ENCODE measurements at regions of chr19 and their contacts with region 1.

Region 1: DNA sequence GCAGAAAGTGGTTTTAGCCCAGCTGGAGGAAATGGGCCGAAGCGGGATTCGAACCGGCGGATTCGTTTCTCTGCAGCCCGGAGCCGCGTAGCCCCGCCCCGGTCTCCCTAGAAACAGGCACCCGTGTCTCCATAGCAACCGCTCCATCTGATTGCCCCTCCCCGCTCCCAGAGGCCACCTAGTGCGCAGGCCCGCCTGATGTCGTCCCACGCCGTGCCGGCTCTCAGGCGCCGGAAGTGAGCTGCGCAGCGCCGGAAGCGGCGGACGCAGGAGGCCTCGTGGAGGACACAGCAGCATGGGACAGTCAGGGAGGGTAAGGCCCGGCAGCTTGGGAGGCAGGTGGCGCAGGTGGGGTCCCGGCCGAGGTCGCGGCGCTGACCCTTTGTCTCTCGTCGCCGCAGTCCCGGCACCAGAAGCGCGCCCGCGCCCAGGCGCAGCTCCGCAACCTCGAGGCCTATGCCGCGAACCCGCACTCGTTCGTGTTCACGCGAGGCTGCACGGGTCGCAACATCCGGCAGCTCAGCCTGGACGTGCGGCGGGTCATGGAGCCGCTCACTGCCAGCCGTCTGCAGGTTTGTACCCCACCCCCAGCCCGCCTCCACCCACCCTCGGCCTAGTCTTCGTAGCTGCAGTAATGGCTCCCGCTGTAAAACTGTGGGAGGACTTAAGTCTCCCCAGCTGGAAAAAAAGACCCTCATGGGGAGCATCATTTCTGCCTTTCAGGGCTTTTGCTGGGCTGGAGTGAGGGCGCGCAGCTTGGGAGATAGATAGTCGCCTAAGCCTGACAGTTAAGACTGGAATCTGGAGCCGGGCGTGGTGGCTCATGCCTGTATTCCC is at the start of gene PPAN:
- DNase-seq: peak; percentile 97
- H3K4me3 Mint-ChIP-seq: peak within 1 kb of the TSS; percentile 97
- H3K27ac Mint-ChIP-seq: peak within 1 kb of the TSS; percentile 99
- H3K4me1 Mint-ChIP-seq: peaks cover 60% of the 10 kb centered on the region
- H3K27me3 Mint-ChIP-seq: peaks cover 1% of the 10 kb centered on the region
- total RNA-seq, gene PPAN: 234 and 250 TPM in 2 replicates

Region 2: DNA sequence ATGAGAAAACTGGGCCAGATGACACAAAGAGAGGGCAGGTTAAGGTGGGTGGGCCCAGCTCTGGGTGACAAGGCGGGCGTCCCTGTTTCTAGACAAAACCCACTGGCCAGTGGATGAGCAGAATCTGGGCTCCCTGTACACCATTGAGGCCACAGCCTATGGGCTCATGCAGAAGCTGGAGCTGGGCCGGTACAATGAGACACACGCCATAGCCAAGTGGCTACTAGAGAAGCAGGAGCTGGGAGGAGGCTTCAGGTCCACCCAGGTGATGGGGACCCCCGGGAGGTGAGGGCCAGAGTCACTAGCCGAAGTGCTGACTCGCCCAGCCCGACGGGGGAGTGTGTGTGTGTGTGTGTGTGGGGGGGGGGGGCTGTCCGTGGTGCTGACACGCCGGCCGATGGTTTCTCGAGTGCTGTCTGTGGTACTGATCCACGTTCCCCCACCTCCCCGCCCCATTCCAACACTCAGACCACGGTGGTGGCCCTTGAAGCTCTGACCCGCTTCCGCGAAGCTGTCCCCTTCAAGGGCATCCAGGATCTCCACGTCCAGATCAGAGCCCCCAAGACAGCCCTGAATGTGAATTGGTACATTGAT is 44.5 kb before region 1 on chr19:
- intact Hi-C with region 1: no loop called
- DNase-seq: no peak
- H3K4me3 Mint-ChIP-seq: no peak overlapping the region
- H3K27ac Mint-ChIP-seq: no peak overlapping the region
- H3K4me1 Mint-ChIP-seq: no peaks in the 10 kb centered on the region
- H3K27me3 Mint-ChIP-seq: peaks cover 3% of the 10 kb centered on the region

Region 3: GRCh38 chr19:10085641-10086590 is 20.4 kb before region 1 on chr19 and contains the start of gene SHFL:
- intact Hi-C with region 1: loop called (anchors 2 kb)
- DNase-seq: peak; percentile 88
- H3K4me3 Mint-ChIP-seq: peak within 1 kb of the TSS; percentile 90
- H3K27ac Mint-ChIP-seq: peak within 1 kb of the TSS; percentile 88
- H3K4me1 Mint-ChIP-seq: peaks cover 7% of the 10 kb centered on the region
- H3K27me3 Mint-ChIP-seq: peaks cover 2% of the 10 kb centered on the region
- total RNA-seq, gene SHFL: 64.1 and 70.5 TPM in 2 replicates

Region 4: DNA sequence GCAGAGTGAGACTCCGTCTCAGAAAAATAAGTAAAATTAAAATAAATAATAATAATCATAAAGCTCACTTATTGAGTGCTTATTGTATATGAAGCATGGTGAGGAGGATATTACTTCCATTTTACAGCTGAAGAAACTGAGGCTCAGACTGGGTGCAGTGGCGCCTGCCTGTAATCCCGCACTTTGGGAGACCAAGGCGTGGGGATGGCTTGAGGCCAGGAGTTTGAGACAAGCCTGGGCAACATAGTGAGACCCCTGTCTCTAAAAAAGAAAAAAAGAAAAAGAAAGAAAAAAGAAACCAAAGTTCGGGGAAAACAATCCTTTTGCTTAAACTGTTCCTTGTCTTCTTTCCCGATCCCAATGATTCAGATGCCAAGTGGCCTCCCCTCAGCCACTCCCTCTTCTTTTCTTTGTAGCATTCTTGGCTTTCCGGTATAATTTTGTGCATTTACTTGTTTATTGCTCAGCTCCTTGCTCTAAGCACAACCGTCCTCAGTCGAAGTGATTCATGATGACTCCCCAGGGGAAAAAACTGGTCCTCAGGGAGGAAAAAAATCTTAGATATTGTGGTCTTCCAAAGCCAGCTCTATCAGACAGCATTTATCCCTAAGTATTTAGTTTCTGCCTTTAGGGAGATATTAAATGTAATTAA is 14.3 kb after region 1 on chr19:
- intact Hi-C with region 1: loop called (anchors 1 kb)
- DNase-seq: no peak
- H3K4me3 Mint-ChIP-seq: no peak overlapping the region
- H3K27ac Mint-ChIP-seq: no peak overlapping the region
- H3K4me1 Mint-ChIP-seq: peaks cover 11% of the 10 kb centered on the region
- H3K27me3 Mint-ChIP-seq: no peaks in the 10 kb centered on the region

Region 5: DNA sequence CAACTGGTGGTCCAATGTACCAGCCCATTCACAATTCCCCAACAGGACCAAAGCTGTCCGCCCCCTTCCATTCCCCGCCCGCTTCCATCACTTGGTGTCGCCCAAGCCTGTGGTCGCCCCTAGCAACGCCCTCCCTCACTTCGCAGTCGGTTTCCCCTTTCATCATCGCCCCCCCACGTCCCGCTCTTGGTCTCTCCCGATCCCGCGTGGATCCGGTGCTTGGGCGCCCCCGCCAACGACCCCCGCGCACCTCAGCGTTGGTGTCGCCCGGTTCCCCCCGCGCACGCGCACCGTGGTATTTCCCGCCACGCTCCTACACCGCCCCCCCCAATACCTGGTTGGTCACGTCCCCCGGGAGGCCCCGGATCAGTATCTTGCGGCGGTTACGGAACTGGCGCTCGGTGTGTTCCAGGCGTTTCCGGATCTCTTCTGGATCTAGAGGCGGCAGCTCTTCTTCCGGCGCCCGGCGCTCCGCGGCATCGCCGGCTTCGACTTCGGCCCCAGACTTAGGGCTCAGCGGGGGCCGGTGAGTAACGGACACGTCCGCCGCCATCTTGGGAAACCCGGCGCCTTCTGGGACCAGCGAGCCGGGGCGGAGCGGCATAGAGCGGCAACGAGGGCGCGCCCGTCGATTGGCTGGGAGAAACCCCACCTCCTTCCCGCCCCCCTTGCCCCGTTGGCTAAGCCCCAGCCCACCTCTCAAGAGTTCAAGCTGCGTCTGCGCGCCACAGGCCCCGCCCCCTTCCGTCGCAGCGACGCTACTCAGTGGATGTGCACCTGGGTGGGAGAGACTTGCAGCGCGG is 226.8 kb after region 1 on chr19 and contains the start of gene RAVER1:
- intact Hi-C with region 1: loop called (anchors 2 kb)
- DNase-seq: peak; percentile 95
- H3K4me3 Mint-ChIP-seq: peak within 1 kb of the TSS; percentile 90
- H3K27ac Mint-ChIP-seq: peak within 1 kb of the TSS; percentile 95
- H3K4me1 Mint-ChIP-seq: peaks cover 11% of the 10 kb centered on the region
- H3K27me3 Mint-ChIP-seq: no peaks in the 10 kb centered on the region
- total RNA-seq, gene RAVER1: 92.5 and 92.8 TPM in 2 replicates